ENCODE measurements at regions of chr3 and their contacts with region 1.

Region 1: GRCh38 chr3:145219355-145220235 is 941.4 kb downstream of the PLOD2 start:
- DNase-seq: peak; percentile 22
- H3K4me3 ChIP-seq: no peak overlapping the region
- H3K27ac ChIP-seq: no peak overlapping the region
- H3K4me1 ChIP-seq: peaks cover 2% of the 10 kb centered on the region
- H3K27me3 ChIP-seq: no peaks in the 10 kb centered on the region
- CTCF ChIP-seq: no peak
- POLR2A ChIP-seq: no peak

Region 2: DNA sequence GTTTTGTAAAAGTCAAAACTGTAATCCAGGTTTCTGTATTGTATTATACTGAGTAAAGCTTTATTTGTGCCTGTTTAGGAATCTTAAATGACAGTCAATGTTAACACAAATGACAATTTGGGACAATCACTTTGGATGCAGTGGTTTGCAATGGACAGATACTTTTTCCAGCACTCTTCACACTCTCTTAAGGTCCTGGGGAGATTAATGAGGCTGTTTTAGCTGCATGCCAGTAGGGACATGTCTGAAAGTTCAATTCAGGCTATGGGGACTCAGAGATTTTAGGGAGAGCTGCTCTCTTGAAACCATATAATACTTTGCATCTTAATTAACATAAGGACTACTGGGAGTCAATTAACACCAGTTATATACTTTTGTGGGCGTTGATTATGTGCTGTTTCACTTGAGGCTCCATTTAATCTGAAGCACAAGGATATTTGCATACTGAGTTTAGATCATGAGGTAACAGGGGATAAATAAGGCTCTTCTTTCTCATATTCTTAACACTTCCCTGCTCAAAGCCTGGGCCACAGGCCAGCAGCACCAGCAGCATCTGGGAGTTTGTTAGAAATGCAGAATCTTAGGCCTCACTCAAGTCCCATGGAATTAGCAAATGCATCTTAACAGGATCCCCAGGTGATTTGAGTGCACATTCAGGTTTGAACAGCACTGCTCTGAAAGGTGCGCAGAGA is 31.4 kb before region 1 on chr3:
- CTCF ChIA-PET with region 1: no interaction called
- POLR2A ChIA-PET with region 1: no interaction called
- dilution Hi-C with region 1: no loop called
- intact Hi-C with region 1: no loop called
- DNase-seq: no peak
- H3K4me3 ChIP-seq: no peak overlapping the region
- H3K27ac ChIP-seq: no peak overlapping the region
- H3K4me1 ChIP-seq: peaks cover 13% of the 10 kb centered on the region
- H3K27me3 ChIP-seq: no peaks in the 10 kb centered on the region
- CTCF ChIP-seq: no peak
- POLR2A ChIP-seq: no peak

Region 3: DNA sequence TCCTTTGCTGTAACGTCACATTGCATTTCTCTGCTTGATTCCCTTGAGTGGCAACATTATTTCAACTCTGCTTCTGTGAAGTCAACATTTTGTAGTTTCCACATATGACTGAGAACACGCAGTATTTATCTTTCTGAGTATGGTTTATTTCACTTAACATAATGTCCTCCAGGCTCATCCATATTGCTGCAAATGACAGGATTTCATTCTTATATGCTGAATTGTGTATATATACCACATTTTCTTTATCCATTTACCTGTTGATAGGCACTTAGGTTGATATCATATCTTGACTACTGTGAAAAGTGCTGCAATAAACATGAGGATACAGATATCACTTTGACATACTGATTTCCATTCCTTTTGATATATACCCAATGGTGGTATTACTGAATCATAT is 62.9 kb after region 1 on chr3:
- CTCF ChIA-PET with region 1: no interaction called
- POLR2A ChIA-PET with region 1: no interaction called
- dilution Hi-C with region 1: no loop called
- intact Hi-C with region 1: loop called (anchors 2 kb)
- DNase-seq: no peak
- H3K4me3 ChIP-seq: no peak overlapping the region
- H3K27ac ChIP-seq: no peak overlapping the region
- H3K4me1 ChIP-seq: no peaks in the 10 kb centered on the region
- H3K27me3 ChIP-seq: no peaks in the 10 kb centered on the region
- CTCF ChIP-seq: no peak
- POLR2A ChIP-seq: no peak

Region 4: GRCh38 chr3:145294572-145294971 is 75.0 kb after region 1 on chr3:
- CTCF ChIA-PET with region 1: no interaction called
- POLR2A ChIA-PET with region 1: no interaction called
- dilution Hi-C with region 1: no loop called
- intact Hi-C with region 1: no loop called
- DNase-seq: no peak
- H3K4me3 ChIP-seq: no peak overlapping the region
- H3K27ac ChIP-seq: no peak overlapping the region
- H3K4me1 ChIP-seq: no peaks in the 10 kb centered on the region
- H3K27me3 ChIP-seq: no peaks in the 10 kb centered on the region
- CTCF ChIP-seq: no peak
- POLR2A ChIP-seq: no peak

Region 5: DNA sequence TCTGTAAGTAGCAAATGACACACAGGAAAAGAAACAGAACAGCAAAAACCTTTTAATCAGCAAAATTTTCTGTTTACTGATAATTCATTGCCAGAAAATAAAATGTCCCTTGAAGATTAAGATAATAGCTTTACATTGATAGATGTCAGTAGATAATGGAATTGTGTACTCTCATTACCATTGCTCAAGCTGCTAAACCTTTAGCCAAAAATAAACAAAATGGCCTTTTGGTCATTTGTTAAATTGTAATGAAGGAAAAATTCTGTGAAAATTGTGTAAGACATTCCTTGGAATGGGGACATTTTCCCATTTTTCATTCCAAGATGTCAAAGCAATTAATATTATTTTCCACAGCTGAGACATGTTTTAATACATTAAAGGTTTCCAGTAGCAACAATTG is 751.6 kb after region 1 on chr3:
- CTCF ChIA-PET with region 1: no interaction called
- POLR2A ChIA-PET with region 1: no interaction called
- dilution Hi-C with region 1: no loop called
- intact Hi-C with region 1: no loop called
- DNase-seq: no peak
- H3K4me3 ChIP-seq: no peak overlapping the region
- H3K27ac ChIP-seq: no peak overlapping the region
- H3K4me1 ChIP-seq: no peaks in the 10 kb centered on the region
- H3K27me3 ChIP-seq: no peaks in the 10 kb centered on the region
- CTCF ChIP-seq: no peak
- POLR2A ChIP-seq: no peak

Measured in endothelial cell of umbilical vein (primary cell).